Activated CD8-positive, alpha-beta T cell treated with anti-CD3 and anti-CD28 coated beads for 36 hours (primary cell): ENCODE measurements at regions of chr20 and their contacts with region 1.

Region 1: GRCh38 chr20:35463455-35464300 is 8.3 kb downstream of the CEP250 start:
- DNase-seq: peak; percentile 68
- ATAC-seq: peak; percentile 94
- H3K4me3 Mint-ChIP-seq: no peak overlapping the region
- H3K27ac Mint-ChIP-seq: no peak overlapping the region
- H3K4me1 Mint-ChIP-seq: peaks cover 1% of the 10 kb centered on the region
- H3K27me3 Mint-ChIP-seq: no peaks in the 10 kb centered on the region
- CTCF ChIP-seq: peak; percentile 89

Region 2: DNA sequence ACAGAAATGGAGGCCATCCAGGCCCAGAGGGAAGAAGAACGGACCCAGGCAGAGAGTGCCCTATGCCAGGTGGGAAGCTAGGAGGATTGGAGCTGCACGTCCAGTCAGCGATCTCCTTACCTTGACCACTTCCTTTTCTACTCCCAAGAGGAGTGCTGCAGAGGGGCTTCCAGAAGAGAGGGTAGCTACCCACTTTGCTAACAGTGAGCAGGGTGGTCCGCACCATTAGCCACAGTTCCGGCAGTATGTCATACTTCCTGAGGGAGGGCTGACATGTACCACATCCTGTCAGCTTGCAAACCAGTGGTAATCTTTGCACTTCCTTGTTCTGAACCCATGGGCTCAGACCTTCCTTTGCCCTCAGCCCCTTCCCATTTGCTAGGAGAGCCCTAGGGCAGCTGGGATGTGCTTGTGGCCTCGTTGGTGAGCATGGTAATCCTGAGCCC is 27.1 kb after region 1 on chr20:
- CTCF ChIA-PET with region 1: interaction called, 21 read pairs
- POLR2A ChIA-PET with region 1: interaction called, 8 read pairs
- intact Hi-C with region 1: no loop called
- DNase-seq: peak; percentile 80
- ATAC-seq: peak; percentile 97
- H3K4me3 Mint-ChIP-seq: peak overlapping the region; percentile 100
- H3K27ac Mint-ChIP-seq: peak overlapping the region; percentile 100
- H3K4me1 Mint-ChIP-seq: peaks cover 44% of the 10 kb centered on the region
- H3K27me3 Mint-ChIP-seq: no peaks in the 10 kb centered on the region
- CTCF ChIP-seq: no peak

Region 3: GRCh38 chr20:35502352-35502751 is 38.7 kb after region 1 on chr20:
- CTCF ChIA-PET with region 1: interaction called, 21 read pairs
- POLR2A ChIA-PET with region 1: interaction called, 3 read pairs
- intact Hi-C with region 1: no loop called
- DNase-seq: no peak
- ATAC-seq: no peak
- H3K4me3 Mint-ChIP-seq: no peak overlapping the region
- H3K27ac Mint-ChIP-seq: no peak overlapping the region
- H3K4me1 Mint-ChIP-seq: peaks cover 23% of the 10 kb centered on the region
- H3K27me3 Mint-ChIP-seq: no peaks in the 10 kb centered on the region
- CTCF ChIP-seq: no peak

Region 4: DNA sequence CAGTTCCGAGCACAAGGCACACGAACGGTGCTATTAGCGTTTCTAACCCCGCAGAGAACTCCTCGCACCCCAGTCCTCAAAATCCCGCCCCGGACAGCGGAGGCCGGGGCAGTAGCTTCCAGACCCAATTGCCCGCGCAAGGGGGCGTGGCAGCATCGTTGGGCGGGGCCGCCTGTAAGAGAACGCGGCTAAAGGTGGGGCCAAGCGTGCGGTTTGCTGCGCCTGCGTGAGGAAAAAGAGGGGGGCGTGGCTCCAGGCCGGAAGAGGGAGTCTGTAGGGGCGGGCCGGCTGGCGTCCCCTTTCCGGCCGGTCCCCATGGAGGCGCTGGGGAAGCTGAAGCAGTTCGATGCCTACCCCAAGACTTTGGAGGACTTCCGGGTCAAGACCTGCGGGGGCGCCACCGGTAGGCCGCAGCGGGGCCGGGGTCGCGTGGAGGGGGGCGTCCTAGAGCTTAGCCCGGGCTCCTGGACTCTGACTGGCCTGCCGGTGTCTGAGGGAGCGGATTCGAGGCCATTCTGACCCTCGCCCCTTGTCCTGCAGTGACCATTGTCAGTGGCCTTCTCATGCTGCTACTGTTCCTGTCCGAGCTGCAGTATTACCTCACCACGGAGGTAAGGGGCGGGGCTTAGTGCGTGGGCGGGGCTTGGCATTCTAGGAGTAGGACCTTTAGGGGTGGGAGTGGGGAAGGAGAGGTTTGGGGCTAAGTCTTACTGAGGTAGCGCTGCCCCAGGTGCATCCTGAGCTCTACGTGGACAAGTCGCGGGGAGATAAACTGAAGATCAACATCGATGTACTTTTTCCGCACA is 78.3 kb after region 1 on chr20 and contains the start of gene ERGIC3:
- CTCF ChIA-PET with region 1: interaction called, 10 read pairs
- POLR2A ChIA-PET with region 1: no interaction called
- intact Hi-C with region 1: no loop called
- DNase-seq: peak; percentile 99
- ATAC-seq: peak; percentile 99
- H3K4me3 Mint-ChIP-seq: peak within 1 kb of the TSS; percentile 79
- H3K27ac Mint-ChIP-seq: peak within 1 kb of the TSS; percentile 87
- H3K4me1 Mint-ChIP-seq: peaks cover 17% of the 10 kb centered on the region
- H3K27me3 Mint-ChIP-seq: no peaks in the 10 kb centered on the region
- CTCF ChIP-seq: no peak
- total RNA-seq, gene ERGIC3: 94.3 to 98.0 TPM